PC-9 (cell line): ENCODE measurements at regions of chr2 and their contacts with region 1.

Region 1: GRCh38 chr2:29115797-29116781 is 874 bp downstream of the CLIP4 start:
- DNase-seq: peak; percentile 58 to 71
- H3K4me3 ChIP-seq: peak overlapping the region; percentile 90
- H3K27ac ChIP-seq: peak overlapping the region; percentile 97
- H3K4me1 ChIP-seq: peaks cover 70% of the 10 kb centered on the region
- H3K27me3 ChIP-seq: no peaks in the 10 kb centered on the region
- CTCF ChIP-seq: no peak

Region 2: DNA sequence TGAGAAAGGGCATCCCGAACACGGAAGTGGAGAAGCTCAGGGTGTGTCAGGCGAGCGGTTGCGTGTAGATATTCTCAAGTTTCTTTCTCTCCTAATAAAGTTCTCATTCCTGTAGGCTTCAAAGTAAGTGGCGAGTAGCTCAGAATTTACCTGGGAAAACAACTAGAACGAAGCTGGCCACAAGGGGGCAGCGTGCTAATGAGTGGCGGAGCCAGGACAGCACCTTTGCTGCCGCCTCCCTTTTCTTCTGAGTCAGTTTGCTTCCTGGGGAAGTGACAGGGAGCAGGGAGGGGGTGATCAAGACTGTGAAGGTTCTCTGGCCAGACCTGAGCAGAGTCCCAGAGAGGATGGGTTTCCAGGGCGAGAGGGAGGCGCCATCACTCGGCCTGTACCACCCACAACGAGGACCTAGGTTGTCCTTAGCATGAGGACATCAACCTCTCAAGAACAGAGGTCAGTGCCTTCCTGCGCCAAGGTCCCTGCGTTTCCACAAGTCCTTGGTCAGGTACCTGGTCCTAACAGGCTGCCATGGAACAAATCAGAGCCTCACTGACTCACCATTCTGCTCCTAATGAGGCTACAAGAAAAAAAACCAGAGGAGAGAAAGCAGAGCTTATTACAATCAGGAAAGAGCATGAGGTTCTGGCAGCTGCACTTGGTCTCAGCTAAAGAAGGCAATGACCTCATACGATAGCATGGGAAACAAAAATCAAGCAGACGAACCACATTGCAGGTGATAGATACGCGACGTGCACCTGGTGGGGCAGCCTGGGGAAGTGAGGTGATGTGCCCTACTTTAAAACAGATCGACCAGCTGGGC is 521.6 kb before region 1 on chr2:
- CTCF ChIA-PET with region 1: no interaction called
- POLR2A ChIA-PET with region 1: no interaction called
- intact Hi-C with region 1: no loop called
- DNase-seq: peak; percentile 94 to 95
- H3K4me3 ChIP-seq: no peak overlapping the region; the same call in 1 of the 2 replicates
- H3K27ac ChIP-seq: peak overlapping the region; percentile 69
- H3K4me1 ChIP-seq: peaks cover 40% of the 10 kb centered on the region
- H3K27me3 ChIP-seq: no peaks in the 10 kb centered on the region
- CTCF ChIP-seq: peak; percentile 91

Region 3: GRCh38 chr2:28855193-28855592 is 260.9 kb before region 1 on chr2:
- CTCF ChIA-PET with region 1: no interaction called
- POLR2A ChIA-PET with region 1: interaction called, 12 read pairs
- intact Hi-C with region 1: no loop called
- DNase-seq: no peak
- H3K4me3 ChIP-seq: no peak overlapping the region
- H3K27ac ChIP-seq: no peak overlapping the region
- H3K4me1 ChIP-seq: no peaks in the 10 kb centered on the region
- H3K27me3 ChIP-seq: no peaks in the 10 kb centered on the region
- CTCF ChIP-seq: no peak

Region 4: DNA sequence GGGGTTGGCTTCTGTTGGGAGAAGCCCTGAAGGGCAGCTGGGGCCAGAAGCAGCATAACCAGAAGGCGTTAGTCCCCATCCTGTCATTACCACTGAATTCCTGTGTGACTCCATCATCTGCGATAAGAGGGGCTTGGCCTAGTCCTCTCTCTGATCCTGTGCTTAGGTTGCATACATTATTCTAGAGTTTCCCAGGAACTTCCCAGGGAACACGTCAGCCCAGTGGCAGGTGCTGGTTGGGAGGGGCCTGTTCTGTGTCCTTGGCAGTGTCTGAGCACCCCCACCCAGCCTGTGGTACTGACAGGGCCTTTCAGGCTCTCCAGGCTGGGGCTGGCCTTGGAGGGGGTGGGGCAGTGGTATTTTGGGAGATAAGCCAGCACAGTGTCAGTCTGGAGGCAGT is 139.5 kb before region 1 on chr2:
- CTCF ChIA-PET with region 1: no interaction called
- POLR2A ChIA-PET with region 1: no interaction called
- intact Hi-C with region 1: loop called (anchors 1 kb)
- DNase-seq: peak; percentile 92 to 99
- H3K4me3 ChIP-seq: no peak overlapping the region
- H3K27ac ChIP-seq: peak overlapping the region; percentile 56
- H3K4me1 ChIP-seq: peaks cover 39% of the 10 kb centered on the region
- H3K27me3 ChIP-seq: no peaks in the 10 kb centered on the region
- CTCF ChIP-seq: no peak

Region 5: GRCh38 chr2:29033172-29033571 is 82.9 kb before region 1 on chr2:
- CTCF ChIA-PET with region 1: no interaction called
- POLR2A ChIA-PET with region 1: interaction called, 11 read pairs
- intact Hi-C with region 1: loop called (anchors 1 kb)
- DNase-seq: peak; percentile 63 to 80
- H3K4me3 ChIP-seq: no peak overlapping the region
- H3K27ac ChIP-seq: no peak overlapping the region
- H3K4me1 ChIP-seq: peaks cover 14% of the 10 kb centered on the region
- H3K27me3 ChIP-seq: no peaks in the 10 kb centered on the region
- CTCF ChIP-seq: no peak

Region 6: GRCh38 chr2:29053670-29054400 is 62.3 kb before region 1 on chr2:
- CTCF ChIA-PET with region 1: no interaction called
- POLR2A ChIA-PET with region 1: interaction called, 3 read pairs
- intact Hi-C with region 1: loop called (anchors 1 kb)
- DNase-seq: peak in 1 of 2 experiments; percentile 30
- H3K4me3 ChIP-seq: no peak overlapping the region
- H3K27ac ChIP-seq: peak overlapping the region; percentile 85
- H3K4me1 ChIP-seq: peaks cover 25% of the 10 kb centered on the region
- H3K27me3 ChIP-seq: no peaks in the 10 kb centered on the region
- CTCF ChIP-seq: peak; percentile 75

Region 7: DNA sequence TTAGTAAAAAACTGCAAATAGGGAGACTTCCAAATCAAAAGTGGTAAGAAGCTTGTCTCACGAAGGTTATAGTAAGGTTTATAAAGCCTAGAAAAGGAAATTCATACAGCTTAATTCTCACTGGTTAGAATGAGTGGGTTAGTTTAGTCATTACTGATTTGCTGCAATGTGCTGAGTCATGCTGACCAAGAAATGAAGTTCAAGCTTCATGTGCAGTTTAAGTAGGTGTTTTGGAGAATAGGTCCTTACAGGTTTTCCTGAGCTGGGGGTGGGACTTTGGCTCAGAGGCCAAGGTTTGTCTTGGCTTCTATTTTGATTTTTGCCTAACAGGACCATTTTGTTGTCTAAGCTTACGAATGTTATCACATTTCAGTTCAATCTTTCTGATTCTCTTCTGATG is 14.2 kb after region 1 on chr2:
- CTCF ChIA-PET with region 1: interaction called, 24 read pairs
- POLR2A ChIA-PET with region 1: interaction called, 85 read pairs
- intact Hi-C with region 1: loop called (anchors 1 kb)
- DNase-seq: peak; percentile 62 to 88
- H3K4me3 ChIP-seq: peak overlapping the region; percentile 54
- H3K27ac ChIP-seq: peak overlapping the region; percentile 97
- H3K4me1 ChIP-seq: peaks cover 59% of the 10 kb centered on the region
- H3K27me3 ChIP-seq: no peaks in the 10 kb centered on the region
- CTCF ChIP-seq: no peak

Region 8: DNA sequence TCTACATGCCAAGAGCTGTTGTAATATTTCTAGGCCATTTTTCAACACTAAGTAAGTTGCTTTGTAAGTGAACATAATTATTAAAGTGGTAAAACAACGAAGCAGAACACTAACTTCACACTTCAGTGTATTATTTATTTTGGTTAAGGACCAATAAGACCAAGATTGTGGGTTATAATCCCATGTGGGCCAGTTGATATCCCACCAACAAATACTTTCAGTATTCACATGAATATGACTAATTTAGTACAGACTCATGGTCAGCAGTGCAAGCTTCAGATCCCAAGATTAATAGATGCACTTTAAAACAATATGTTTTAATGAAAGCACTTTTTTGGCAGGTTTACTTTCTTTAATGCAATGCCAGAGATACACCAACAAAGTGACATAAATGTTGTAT is 1485.3 kb after region 1 on chr2:
- CTCF ChIA-PET with region 1: no interaction called
- POLR2A ChIA-PET with region 1: interaction called, 15 read pairs
- intact Hi-C with region 1: no loop called
- DNase-seq: no peak
- H3K4me3 ChIP-seq: no peak overlapping the region
- H3K27ac ChIP-seq: no peak overlapping the region
- H3K4me1 ChIP-seq: no peaks in the 10 kb centered on the region
- H3K27me3 ChIP-seq: no peaks in the 10 kb centered on the region
- CTCF ChIP-seq: no peak